CD4-positive, alpha-beta T cell (primary cell): ENCODE measurements at regions of chr1 and their contacts with region 1.

Region 1: GRCh38 chr1:108075055-108075454 is 110.1 kb upstream of the VAV3 start:
- DNase-seq: peak in 3 of 14 experiments; percentile 28 to 49 (median 41)
- ATAC-seq: no peak
- H3K4me3 ChIP-seq: no peak overlapping the region
- H3K4me3 Mint-ChIP-seq: no peak overlapping the region
- H3K27ac ChIP-seq: no peak overlapping the region
- H3K27ac Mint-ChIP-seq: no peak overlapping the region
- H3K4me1 ChIP-seq: peaks cover 19% of the 10 kb centered on the region
- H3K4me1 Mint-ChIP-seq: peaks cover 56% of the 10 kb centered on the region
- H3K27me3 ChIP-seq: no peaks in the 10 kb centered on the region
- H3K27me3 Mint-ChIP-seq: no peaks in the 10 kb centered on the region
- CTCF ChIP-seq: no peak

Region 2: DNA sequence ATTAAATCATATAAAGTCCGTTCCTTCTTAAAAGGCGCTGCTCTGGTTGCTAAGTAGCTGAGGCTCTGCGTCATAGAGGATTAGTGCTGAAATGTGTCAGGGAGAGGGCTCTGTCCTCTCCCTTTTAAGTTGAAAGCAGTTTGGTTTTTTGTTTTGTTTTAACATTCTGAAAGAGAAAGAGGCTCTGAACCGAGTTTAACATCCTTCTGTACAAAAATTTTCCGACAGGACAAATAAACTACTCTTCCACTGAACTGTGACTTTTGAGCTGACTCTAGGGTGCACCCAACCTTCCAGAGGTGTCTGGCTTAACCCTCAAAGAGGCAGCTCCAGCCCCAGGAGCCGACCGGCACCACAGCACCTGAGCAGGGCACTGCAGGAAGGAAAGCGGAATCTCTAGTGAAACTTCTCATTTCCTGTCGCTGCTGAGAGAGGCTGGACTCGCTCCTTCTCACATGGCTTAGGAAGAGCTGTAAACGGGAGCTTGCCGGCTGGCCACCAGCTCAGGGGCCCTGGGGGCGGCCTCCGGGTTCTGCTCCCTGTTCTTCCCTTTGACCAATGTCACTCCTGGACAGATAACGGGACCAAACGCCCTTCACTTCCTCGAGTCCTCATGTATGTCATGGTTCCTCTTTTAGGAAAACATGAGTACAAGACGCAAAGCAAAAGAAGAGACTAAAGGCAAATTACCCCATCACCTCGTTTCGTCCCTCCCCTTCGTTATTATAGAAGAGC is 111.3 kb before region 1 on chr1:
- CTCF ChIA-PET with region 1: no interaction called
- POLR2A ChIA-PET with region 1: interaction called, 4 read pairs
- intact Hi-C with region 1: loop called in 1 of 2 experiments (anchors 2 kb)
- DNase-seq: peak in 11 of 14 experiments; percentile 10 to 72 (median 27)
- ATAC-seq: peak; percentile 64
- H3K4me3 ChIP-seq: peak overlapping the region; percentile 85
- H3K4me3 Mint-ChIP-seq: peak overlapping the region; percentile 91
- H3K27ac ChIP-seq: peak overlapping the region; percentile 6 to 48
- H3K27ac Mint-ChIP-seq: peak overlapping the region; percentile 91
- H3K4me1 ChIP-seq: peaks cover 23% of the 10 kb centered on the region
- H3K4me1 Mint-ChIP-seq: peaks cover 29% of the 10 kb centered on the region
- H3K27me3 ChIP-seq: no peaks in the 10 kb centered on the region
- H3K27me3 Mint-ChIP-seq: no peaks in the 10 kb centered on the region
- CTCF ChIP-seq: no peak

Region 3: GRCh38 chr1:108041360-108042142 is 33.5 kb before region 1 on chr1:
- CTCF ChIA-PET with region 1: no interaction called
- POLR2A ChIA-PET with region 1: interaction called, 3 read pairs
- intact Hi-C with region 1: loop called in 1 of 2 experiments (anchors 5 kb)
- DNase-seq: peak in 4 of 14 experiments; percentile 14 to 41 (median 35)
- ATAC-seq: peak; percentile 39
- H3K4me3 ChIP-seq: no peak overlapping the region
- H3K4me3 Mint-ChIP-seq: peak overlapping the region; percentile 4
- H3K27ac ChIP-seq: no peak overlapping the region
- H3K27ac Mint-ChIP-seq: peak overlapping the region; percentile 27
- H3K4me1 ChIP-seq: peaks cover 20% of the 10 kb centered on the region
- H3K4me1 Mint-ChIP-seq: peaks cover 48% of the 10 kb centered on the region
- H3K27me3 ChIP-seq: no peaks in the 10 kb centered on the region
- H3K27me3 Mint-ChIP-seq: no peaks in the 10 kb centered on the region
- CTCF ChIP-seq: no peak